H1 (cell line): ENCODE measurements at regions of chr6 and their contacts with region 1.

Region 1: GRCh38 chr6:43769526-43770416 is at the start of gene VEGFA:
- DNase-seq: peak in 1 of 2 experiments; percentile 97
- H3K4me3 ChIP-seq: peak within 1 kb of the TSS; percentile 77 to 91 (median 85)
- H3K27ac ChIP-seq: no peak within 1 kb of the TSS; the same call in 1 of the 2 replicates
- H3K4me1 ChIP-seq: peaks cover 3 to 31% (median 18%) of the 10 kb centered on the region in 4 experiments
- H3K27me3 ChIP-seq: peaks cover 0 to 7% (median 0%) of the 10 kb centered on the region in 4 experiments; a peak in 1 of 7 replicates
- CTCF ChIP-seq: peak in 2 of 3 experiments; percentile 89 to 96; a peak in 3 of 4 replicates
- EP300 ChIP-seq: no peak
- POLR2A ChIP-seq: no peak
- RAD21 ChIP-seq: peak; percentile 92 to 93
- total RNA-seq, gene VEGFA: 40.7 and 42.2 TPM in 2 replicates

Region 2: DNA sequence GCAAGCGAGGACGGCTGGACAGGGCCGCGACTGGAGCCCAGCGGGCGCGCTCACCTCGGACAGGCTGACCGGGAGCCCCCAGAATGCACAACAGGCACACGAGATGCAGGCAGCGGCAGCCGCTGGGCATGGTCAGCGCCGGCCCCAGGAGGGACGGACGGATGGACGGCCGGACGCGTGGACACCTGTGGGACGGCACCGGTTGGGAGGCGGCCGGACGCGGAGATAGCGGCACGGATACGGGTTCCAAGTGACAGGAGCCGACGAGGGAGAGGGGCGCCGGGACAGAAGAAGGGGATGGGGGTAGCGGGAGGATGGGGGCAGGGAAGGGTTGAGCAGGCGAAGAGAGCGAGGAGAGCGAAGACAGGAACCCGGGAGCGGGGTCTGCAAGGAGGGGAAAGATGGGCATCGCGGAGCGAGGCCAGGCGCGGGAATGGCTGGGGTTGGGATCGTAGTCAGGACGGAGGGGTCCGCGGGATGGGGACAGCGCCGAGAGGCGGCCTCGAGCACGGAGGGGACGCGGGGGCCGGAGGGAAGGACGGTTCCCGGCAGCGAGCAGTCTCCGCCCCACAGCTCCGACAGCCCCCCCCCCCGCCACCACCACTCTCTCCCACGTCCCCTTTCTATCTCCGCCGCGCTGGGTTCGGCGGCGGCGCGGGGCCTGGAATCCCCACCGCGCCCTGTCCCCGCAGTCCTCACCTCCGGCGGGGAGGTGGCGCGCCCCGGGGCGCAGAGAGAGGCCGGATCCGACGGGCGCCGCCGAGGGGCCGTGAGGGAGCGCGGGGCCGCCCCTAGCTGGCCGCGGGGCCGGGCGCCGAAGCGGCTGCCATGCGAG is 314.9 kb before region 1 on chr6:
- CTCF ChIA-PET with region 1: no interaction called
- POLR2A ChIA-PET with region 1: no interaction called
- DNase-seq: peak in 1 of 2 experiments; percentile 58
- H3K4me3 ChIP-seq: peak overlapping the region; percentile 19 to 63 (median 40)
- H3K27ac ChIP-seq: no peak overlapping the region
- H3K4me1 ChIP-seq: peaks cover 0 to 4% (median 2%) of the 10 kb centered on the region in 4 experiments; a peak in 3 of 7 replicates
- H3K27me3 ChIP-seq: peaks cover 7 to 25% (median 19%) of the 10 kb centered on the region in 4 experiments
- CTCF ChIP-seq: no peak
- EP300 ChIP-seq: no peak
- POLR2A ChIP-seq: no peak; a peak in 1 of 3 replicates
- RAD21 ChIP-seq: no peak

Region 3: GRCh38 chr6:43695215-43695966 is 74.4 kb before region 1 on chr6:
- CTCF ChIA-PET with region 1: interaction called, 9 read pairs
- POLR2A ChIA-PET with region 1: interaction called, 10 read pairs
- DNase-seq: peak in 1 of 2 experiments; percentile 63
- H3K4me3 ChIP-seq: no peak overlapping the region
- H3K27ac ChIP-seq: peak overlapping the region; percentile 60; the same call in 1 of the 2 replicates
- H3K4me1 ChIP-seq: peaks cover 10 to 26% (median 20%) of the 10 kb centered on the region in 4 experiments; a peak in 6 of 7 replicates
- H3K27me3 ChIP-seq: no peaks in the 10 kb centered on the region
- CTCF ChIP-seq: no peak
- EP300 ChIP-seq: peak in 1 of 2 experiments; percentile 24; a peak in 1 of 3 replicates
- POLR2A ChIP-seq: no peak
- RAD21 ChIP-seq: no peak

Region 4: DNA sequence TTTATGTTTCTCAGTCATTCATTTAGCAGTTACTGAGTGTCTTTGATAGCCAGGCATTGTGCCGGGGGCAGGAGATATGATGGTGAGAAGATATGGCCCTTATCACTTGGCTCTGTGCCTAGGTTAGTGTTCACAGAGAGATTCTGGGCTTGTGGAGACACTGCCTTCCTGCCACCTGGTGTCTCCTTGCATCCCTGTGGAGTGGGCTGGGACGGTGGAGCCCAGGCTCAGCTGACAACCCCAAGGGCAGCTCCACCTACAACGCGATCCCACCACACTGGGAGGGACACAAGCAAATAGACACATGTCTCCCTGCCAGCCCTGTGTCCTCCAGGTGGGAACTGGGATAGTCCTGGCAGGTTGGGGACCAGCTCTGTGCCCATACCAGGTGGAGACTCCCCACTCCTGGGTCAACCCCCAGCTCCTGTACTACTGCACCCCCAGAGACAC is 30.1 kb before region 1 on chr6:
- CTCF ChIA-PET with region 1: interaction called, 137 read pairs
- POLR2A ChIA-PET with region 1: interaction called, 8 read pairs
- DNase-seq: no peak
- H3K4me3 ChIP-seq: no peak overlapping the region
- H3K27ac ChIP-seq: no peak overlapping the region
- H3K4me1 ChIP-seq: peaks cover 0 to 20% (median 3%) of the 10 kb centered on the region in 4 experiments; a peak in 4 of 7 replicates
- H3K27me3 ChIP-seq: no peaks in the 10 kb centered on the region
- CTCF ChIP-seq: no peak
- EP300 ChIP-seq: no peak
- POLR2A ChIP-seq: no peak
- RAD21 ChIP-seq: no peak

Region 5: DNA sequence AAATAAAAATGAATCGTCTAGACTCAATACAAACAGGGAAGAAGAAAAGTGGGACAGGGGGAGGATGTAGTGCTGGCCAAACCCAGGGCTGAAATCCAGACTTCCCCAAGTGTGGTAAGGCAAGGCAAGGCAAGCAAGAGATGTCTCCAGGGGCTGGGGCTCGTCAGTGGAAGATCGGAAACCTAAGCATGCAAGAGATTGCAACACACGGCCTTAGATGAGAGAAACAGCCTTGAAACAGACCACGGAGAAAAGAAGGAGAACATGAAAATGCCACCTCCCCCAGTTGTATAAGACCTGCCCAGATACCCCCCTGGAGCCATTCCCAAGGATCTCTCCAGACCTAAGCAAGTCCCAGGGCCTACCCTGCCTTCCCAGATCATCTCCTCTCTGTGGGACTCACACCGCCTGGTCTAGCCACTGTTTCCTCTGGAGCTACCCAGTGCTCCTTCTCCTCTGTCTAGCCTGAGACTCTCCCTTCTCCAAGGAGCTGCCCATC is 20.3 kb after region 1 on chr6:
- CTCF ChIA-PET with region 1: interaction called, 73 read pairs
- POLR2A ChIA-PET with region 1: interaction called, 27 read pairs
- DNase-seq: no peak
- H3K4me3 ChIP-seq: no peak overlapping the region
- H3K27ac ChIP-seq: no peak overlapping the region
- H3K4me1 ChIP-seq: no peaks in the 10 kb centered on the region
- H3K27me3 ChIP-seq: no peaks in the 10 kb centered on the region
- CTCF ChIP-seq: no peak
- EP300 ChIP-seq: no peak
- POLR2A ChIP-seq: no peak
- RAD21 ChIP-seq: no peak

Region 6: GRCh38 chr6:43883847-43884651 is 114.3 kb after region 1 on chr6:
- CTCF ChIA-PET with region 1: interaction called, 23 read pairs
- POLR2A ChIA-PET with region 1: interaction called, 4 read pairs
- DNase-seq: no peak
- H3K4me3 ChIP-seq: no peak overlapping the region
- H3K27ac ChIP-seq: no peak overlapping the region
- H3K4me1 ChIP-seq: peaks cover 0 to 4% (median 0%) of the 10 kb centered on the region in 4 experiments; a peak in 2 of 7 replicates
- H3K27me3 ChIP-seq: peaks cover 0 to 2% (median 0%) of the 10 kb centered on the region in 4 experiments; a peak in 1 of 7 replicates
- CTCF ChIP-seq: no peak
- EP300 ChIP-seq: no peak
- POLR2A ChIP-seq: no peak
- RAD21 ChIP-seq: no peak

Region 7: DNA sequence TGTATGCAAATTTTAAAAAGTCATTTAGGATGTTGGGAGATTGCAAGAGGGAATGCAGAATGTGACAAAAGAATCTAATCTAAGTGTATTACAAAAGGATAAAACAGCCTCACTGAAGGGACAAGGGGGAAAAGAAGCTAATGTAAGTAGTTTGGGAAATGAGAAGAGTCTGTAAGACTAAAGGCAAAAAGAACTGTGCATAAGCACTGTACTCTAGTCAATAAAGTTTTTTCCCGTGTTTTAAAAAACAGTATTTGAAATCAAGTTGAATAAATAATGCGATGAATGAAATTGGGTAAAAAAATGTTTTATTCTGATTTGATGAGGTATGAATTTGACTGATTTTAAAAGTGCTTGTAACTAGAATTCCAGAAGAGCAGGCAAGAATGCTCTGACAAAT is 150.0 kb after region 1 on chr6:
- CTCF ChIA-PET with region 1: no interaction called
- POLR2A ChIA-PET with region 1: no interaction called
- DNase-seq: no peak
- H3K4me3 ChIP-seq: no peak overlapping the region
- H3K27ac ChIP-seq: no peak overlapping the region
- H3K4me1 ChIP-seq: no peaks in the 10 kb centered on the region
- H3K27me3 ChIP-seq: no peaks in the 10 kb centered on the region
- CTCF ChIP-seq: no peak
- EP300 ChIP-seq: no peak
- POLR2A ChIP-seq: no peak
- RAD21 ChIP-seq: no peak

Region 8: GRCh38 chr6:43990627-43991619 is 221.2 kb after region 1 on chr6:
- CTCF ChIA-PET with region 1: interaction called, 11 read pairs
- POLR2A ChIA-PET with region 1: interaction called, 3 read pairs
- DNase-seq: no peak
- H3K4me3 ChIP-seq: no peak overlapping the region
- H3K27ac ChIP-seq: no peak overlapping the region
- H3K4me1 ChIP-seq: peaks cover 0 to 16% (median 8%) of the 10 kb centered on the region in 4 experiments; a peak in 6 of 7 replicates
- H3K27me3 ChIP-seq: no peaks in the 10 kb centered on the region
- CTCF ChIP-seq: no peak
- EP300 ChIP-seq: no peak
- POLR2A ChIP-seq: no peak
- RAD21 ChIP-seq: no peak

Region 9: GRCh38 chr6:44074439-44075136 is 304.8 kb after region 1 on chr6:
- CTCF ChIA-PET with region 1: interaction called, 41 read pairs
- POLR2A ChIA-PET with region 1: interaction called, 13 read pairs
- DNase-seq: peak in 1 of 2 experiments; percentile 81
- H3K4me3 ChIP-seq: peak overlapping the region in 1 of 4 experiments; percentile 56; a peak in 1 of 8 replicates
- H3K27ac ChIP-seq: no peak overlapping the region
- H3K4me1 ChIP-seq: peaks cover 9 to 32% (median 26%) of the 10 kb centered on the region in 4 experiments
- H3K27me3 ChIP-seq: peaks cover 0 to 9% (median 2%) of the 10 kb centered on the region in 4 experiments; a peak in 4 of 7 replicates
- CTCF ChIP-seq: peak in 2 of 3 experiments; percentile 88 to 91; a peak in 3 of 4 replicates
- EP300 ChIP-seq: no peak
- POLR2A ChIP-seq: no peak
- RAD21 ChIP-seq: peak; percentile 67 to 77